ENCODE measurements at regions of chr5 and their contacts with region 1.

Region 1: DNA sequence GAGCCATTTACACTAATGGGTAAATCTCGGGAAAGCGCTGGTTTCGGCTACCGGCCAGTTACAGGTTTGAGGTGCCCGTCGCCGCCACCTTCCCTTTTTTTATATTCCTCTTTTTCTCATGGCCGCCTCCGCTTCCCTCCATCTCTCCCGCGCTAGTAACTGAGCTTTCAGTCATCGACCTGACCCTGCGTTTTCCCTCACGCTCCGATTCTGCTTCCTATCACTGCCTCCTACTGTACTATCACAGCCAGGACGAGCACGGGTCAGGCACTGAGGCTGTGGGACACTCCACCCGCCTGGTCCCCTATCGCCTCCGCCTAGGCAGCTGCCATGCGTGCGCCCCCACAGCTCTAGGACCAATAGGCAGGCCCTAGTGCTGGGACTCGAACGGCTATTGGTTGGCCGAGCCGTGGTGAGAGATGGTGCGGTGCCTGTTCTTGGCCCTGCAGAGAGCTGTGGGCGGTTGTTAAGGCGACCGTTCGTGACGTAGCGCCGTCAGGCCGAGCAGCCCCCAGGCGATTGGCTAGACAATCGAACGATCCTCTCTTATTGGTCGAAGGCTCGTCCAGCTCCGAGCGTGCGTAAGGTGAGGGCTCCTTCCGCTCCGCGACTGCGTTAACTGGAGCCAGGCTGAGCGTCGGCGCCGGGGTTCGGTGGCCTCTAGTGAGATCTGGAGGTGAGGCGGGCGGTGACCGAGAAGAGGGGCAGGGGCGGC is at the start of gene HMGCR:
- DNase-seq: peak; percentile 98
- H3K4me3 Mint-ChIP-seq: no peak within 1 kb of the TSS
- H3K27ac Mint-ChIP-seq: no peak within 1 kb of the TSS
- H3K4me1 Mint-ChIP-seq: peaks cover 35% of the 10 kb centered on the region
- H3K27me3 Mint-ChIP-seq: no peaks in the 10 kb centered on the region
- total RNA-seq, gene HMGCR: 86.7 to 94.5 TPM

Region 2: DNA sequence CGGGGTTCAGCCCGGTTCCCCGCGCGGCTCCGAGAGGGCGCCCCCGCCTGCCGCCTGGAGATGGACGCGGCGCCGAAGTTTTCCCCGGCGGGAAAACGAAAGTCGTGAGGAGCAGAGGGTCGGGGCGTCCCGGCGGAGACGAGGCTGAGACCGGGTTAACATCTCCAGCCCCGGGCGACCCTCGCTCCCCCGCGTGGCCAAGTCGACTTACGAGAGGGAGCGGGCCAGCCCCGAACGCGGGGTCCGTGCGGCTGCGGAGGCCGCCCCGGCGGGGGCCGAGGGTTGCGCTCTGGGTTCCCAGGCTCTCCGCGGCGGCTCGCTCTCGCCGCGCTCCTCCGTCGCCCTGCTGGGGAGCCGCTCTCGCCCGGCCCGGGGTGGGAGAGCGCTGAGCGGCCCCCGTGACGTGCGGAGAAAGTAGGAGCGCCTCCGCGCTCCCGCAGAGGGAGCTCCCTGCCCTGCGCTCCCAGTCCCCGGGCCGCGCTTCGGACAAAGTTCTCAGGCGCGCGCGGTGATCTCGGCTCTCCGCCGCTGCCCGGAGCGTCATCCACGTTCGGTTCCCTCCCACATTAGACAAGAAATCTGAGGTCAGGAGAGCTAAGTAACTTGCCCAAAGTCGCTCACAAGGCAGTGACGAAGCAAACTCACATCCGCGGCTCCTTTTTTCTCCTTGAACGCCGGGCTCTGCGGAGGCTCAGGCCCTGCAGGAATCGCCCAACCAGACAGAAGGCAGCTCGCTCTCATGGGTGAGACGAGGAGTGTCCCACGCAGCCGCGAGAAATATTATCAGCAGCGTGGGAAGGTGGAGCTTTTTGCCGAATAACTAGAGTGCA is 283.3 kb before region 1 on chr5:
- CTCF ChIA-PET with region 1: interaction called, 17 read pairs
- POLR2A ChIA-PET with region 1: interaction called, 4 read pairs
- DNase-seq: peak; percentile 56
- H3K4me3 Mint-ChIP-seq: peak overlapping the region; percentile 78
- H3K27ac Mint-ChIP-seq: peak overlapping the region; percentile 69
- H3K4me1 Mint-ChIP-seq: peaks cover 68% of the 10 kb centered on the region
- H3K27me3 Mint-ChIP-seq: peaks cover 42% of the 10 kb centered on the region

Region 3: GRCh38 chr5:75236322-75237316 is 100.2 kb before region 1 on chr5 and contains the start of gene ANKRD31:
- CTCF ChIA-PET with region 1: interaction called, 35 read pairs
- POLR2A ChIA-PET with region 1: interaction called, 24 read pairs
- DNase-seq: peak; percentile 88
- H3K4me3 Mint-ChIP-seq: peak within 1 kb of the TSS; percentile 86
- H3K27ac Mint-ChIP-seq: peak within 1 kb of the TSS; percentile 79
- H3K4me1 Mint-ChIP-seq: peaks cover 15% of the 10 kb centered on the region
- H3K27me3 Mint-ChIP-seq: no peaks in the 10 kb centered on the region
- total RNA-seq, gene ANKRD31: 0.05 to 0.18 TPM

Region 4: DNA sequence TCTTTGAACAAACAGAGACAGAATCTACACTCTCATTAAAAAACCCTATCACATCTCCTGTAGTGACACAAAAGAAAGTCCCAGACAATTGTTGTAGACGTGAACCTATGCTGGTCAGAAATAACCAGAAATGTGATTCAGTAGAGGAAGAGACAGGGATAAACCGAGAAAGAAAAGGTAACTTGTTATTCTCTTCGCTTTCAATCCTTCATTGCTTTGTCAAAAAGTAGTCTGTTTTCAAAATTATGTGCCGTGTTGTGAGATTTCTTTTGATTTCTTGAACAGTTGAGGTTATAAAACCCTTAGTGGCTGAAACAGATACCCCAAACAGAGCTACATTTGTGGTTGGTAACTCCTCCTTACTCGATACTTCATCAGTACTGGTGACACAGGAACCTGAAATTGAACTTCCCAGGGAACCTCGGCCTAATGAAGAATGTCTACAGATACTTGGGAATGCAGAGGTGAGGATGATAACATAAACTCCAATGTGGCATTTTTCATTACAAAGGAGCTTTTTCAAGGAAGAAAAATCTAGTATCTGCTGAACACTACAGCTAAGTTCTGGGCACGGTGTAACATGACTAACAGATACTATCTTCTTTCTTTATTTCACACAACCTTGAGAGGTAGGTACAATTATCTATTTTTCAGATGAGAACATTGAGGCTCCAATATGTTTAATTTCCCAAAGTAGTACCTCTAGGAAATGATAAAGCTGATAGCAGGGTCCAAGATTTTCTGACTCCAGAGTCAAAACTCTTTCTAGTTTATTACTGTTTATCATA is 14.6 kb after region 1 on chr5:
- CTCF ChIA-PET with region 1: interaction called, 12 read pairs
- POLR2A ChIA-PET with region 1: interaction called, 16 read pairs
- DNase-seq: no peak
- H3K4me3 Mint-ChIP-seq: no peak overlapping the region
- H3K27ac Mint-ChIP-seq: peak overlapping the region; percentile 54
- H3K4me1 Mint-ChIP-seq: peaks cover 37% of the 10 kb centered on the region
- H3K27me3 Mint-ChIP-seq: no peaks in the 10 kb centered on the region

Region 5: GRCh38 chr5:75511435-75512384 is 174.9 kb after region 1 on chr5 and contains the starts of genes CERT1 and POLK:
- CTCF ChIA-PET with region 1: interaction called, 4 read pairs
- POLR2A ChIA-PET with region 1: interaction called, 31 read pairs
- DNase-seq: peak; percentile 98
- H3K4me3 Mint-ChIP-seq: peak within 1 kb of the TSS; percentile 95
- H3K27ac Mint-ChIP-seq: peak within 1 kb of the TSS; percentile 86
- H3K4me1 Mint-ChIP-seq: peaks cover 56% of the 10 kb centered on the region
- H3K27me3 Mint-ChIP-seq: no peaks in the 10 kb centered on the region
- total RNA-seq, gene CERT1: 36.2 to 39.7 TPM
- total RNA-seq, gene POLK: 28.3 to 28.7 TPM

Region 6: GRCh38 chr5:75681125-75681830 is 344.5 kb after region 1 on chr5:
- CTCF ChIA-PET with region 1: interaction called, 10 read pairs
- POLR2A ChIA-PET with region 1: no interaction called
- DNase-seq: no peak
- H3K4me3 Mint-ChIP-seq: no peak overlapping the region
- H3K27ac Mint-ChIP-seq: no peak overlapping the region
- H3K4me1 Mint-ChIP-seq: peaks cover 16% of the 10 kb centered on the region
- H3K27me3 Mint-ChIP-seq: no peaks in the 10 kb centered on the region

Region 7: GRCh38 chr5:75717082-75717922 is 380.5 kb after region 1 on chr5 and contains the start of gene POC5:
- CTCF ChIA-PET with region 1: interaction called, 4 read pairs
- POLR2A ChIA-PET with region 1: interaction called, 16 read pairs
- DNase-seq: peak; percentile 99
- H3K4me3 Mint-ChIP-seq: peak within 1 kb of the TSS; percentile 95
- H3K27ac Mint-ChIP-seq: peak within 1 kb of the TSS; percentile 99
- H3K4me1 Mint-ChIP-seq: peaks cover 34% of the 10 kb centered on the region
- H3K27me3 Mint-ChIP-seq: peaks cover 11% of the 10 kb centered on the region
- total RNA-seq, gene POC5: 21.5 TPM